ENCODE measurements at regions of chrX and their contacts with region 1.

Region 1: DNA sequence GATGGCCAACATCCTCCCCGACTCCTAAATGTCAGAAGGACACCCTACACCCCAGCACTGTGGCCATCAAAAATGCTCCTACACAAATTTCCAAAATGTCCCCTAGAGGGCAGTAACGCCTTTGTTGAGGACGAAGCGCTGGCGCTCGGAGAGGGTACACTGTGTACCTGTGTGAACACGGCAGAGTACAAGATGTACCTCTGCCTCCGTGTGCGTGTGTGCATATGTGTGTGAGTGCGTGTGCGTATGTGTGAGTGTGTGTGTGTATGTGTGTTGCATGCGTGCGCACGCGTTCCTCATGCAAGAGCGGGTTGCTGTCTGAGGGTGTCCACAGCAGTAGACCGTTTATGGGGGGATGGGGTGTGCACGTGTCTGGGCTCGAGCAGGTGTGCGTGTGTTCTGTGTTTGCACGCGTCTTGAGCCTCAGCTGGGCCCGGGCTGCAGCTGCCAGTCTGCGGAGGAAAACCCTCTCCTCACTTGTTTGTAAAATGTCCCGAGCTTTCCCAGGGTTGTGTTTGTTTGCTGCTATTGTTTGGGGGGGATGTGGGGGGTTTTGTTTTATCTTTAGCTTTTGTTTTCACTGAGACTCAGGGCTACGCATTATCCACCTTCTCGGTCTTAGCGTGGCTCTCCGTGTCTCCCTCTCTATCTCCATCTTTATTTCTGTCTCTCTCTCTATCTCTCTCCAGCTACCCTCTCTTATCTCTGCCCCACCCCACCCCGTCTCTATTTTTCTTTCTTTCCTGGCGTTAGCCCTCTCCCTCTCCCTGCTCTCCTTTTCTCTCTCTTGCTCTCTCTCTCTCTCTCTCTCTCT is 10.4 kb upstream of the TSPYL2 start:
- DNase-seq: peak; percentile 39 to 90 (median 62)
- ATAC-seq: peak; percentile 88
- H3K4me3 ChIP-seq: peak overlapping the region; percentile 58
- H3K4me3 Mint-ChIP-seq: peak overlapping the region; percentile 91
- H3K27ac ChIP-seq: no peak overlapping the region
- H3K27ac Mint-ChIP-seq: peak overlapping the region; percentile 89
- H3K4me1 ChIP-seq: peaks cover 11% of the 10 kb centered on the region
- H3K4me1 Mint-ChIP-seq: peaks cover 17% of the 10 kb centered on the region
- H3K27me3 ChIP-seq: no peaks in the 10 kb centered on the region
- H3K27me3 Mint-ChIP-seq: no peaks in the 10 kb centered on the region
- CTCF ChIP-seq: peak; percentile 67

Region 2: DNA sequence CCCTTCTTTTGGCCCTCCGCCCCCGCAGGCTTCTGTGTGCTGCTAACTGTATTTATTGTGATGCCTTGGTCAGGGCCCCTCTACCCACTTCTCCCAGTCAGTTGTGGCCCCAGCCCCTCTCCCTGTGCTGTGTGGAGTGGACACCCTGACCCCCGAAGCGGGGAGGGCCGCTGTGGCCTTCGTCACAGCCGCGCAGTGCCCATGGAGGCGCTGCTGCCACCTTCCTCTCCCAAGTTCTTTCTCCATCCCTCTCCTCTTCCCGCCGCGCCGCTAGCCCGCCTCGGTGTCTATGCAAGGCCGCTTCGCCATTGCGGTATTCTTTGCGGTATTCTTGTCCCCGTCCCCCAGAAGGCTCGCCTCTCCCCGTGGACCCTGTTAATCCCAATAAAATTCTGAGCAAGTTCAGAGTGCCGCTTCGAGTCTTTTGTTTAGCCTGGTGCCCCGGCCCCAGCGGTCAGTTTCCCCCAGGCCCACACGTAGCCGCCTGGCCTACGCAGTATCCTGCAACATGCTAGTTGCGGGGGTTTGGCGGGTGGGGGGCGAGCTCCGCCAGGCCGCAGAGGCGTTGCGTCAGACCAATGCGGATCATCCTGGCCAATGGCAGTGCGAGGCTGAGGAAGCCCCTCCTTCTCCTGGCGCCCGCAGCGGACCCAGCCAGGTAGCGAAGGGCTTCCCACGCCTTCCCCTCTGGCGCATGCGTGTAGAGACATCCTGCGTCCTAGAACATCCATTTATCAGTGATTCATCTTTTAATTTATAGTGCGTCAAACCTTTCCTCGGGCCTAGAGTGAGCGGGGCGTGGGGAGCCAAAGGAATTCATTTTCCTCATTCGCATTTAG is 16.5 kb after region 1 on chrX:
- CTCF ChIA-PET with region 1: interaction called, 4 read pairs
- POLR2A ChIA-PET with region 1: interaction called, 10 read pairs
- intact Hi-C with region 1: loop called (anchors 1 kb)
- DNase-seq: peak; percentile 62 to 95 (median 76)
- ATAC-seq: peak; percentile 72
- H3K4me3 ChIP-seq: peak overlapping the region; percentile 60
- H3K4me3 Mint-ChIP-seq: peak overlapping the region; percentile 95
- H3K27ac ChIP-seq: peak overlapping the region; percentile 89 to 94
- H3K27ac Mint-ChIP-seq: peak overlapping the region; percentile 98
- H3K4me1 ChIP-seq: peaks cover 39% of the 10 kb centered on the region
- H3K4me1 Mint-ChIP-seq: peaks cover 67% of the 10 kb centered on the region
- H3K27me3 ChIP-seq: no peaks in the 10 kb centered on the region
- H3K27me3 Mint-ChIP-seq: no peaks in the 10 kb centered on the region
- CTCF ChIP-seq: no peak

Region 3: GRCh38 chrX:53093748-53094583 is 22.2 kb after region 1 on chrX and contains the start of gene KANTR:
- CTCF ChIA-PET with region 1: interaction called, 4 read pairs
- POLR2A ChIA-PET with region 1: interaction called, 10 read pairs
- intact Hi-C with region 1: loop called (anchors 1 kb)
- DNase-seq: peak; percentile 36 to 92 (median 72)
- ATAC-seq: peak; percentile 76
- H3K4me3 ChIP-seq: peak within 1 kb of the TSS; percentile 81
- H3K4me3 Mint-ChIP-seq: peak within 1 kb of the TSS; percentile 93
- H3K27ac ChIP-seq: peak within 1 kb of the TSS; percentile 58 to 85
- H3K27ac Mint-ChIP-seq: peak within 1 kb of the TSS; percentile 93
- H3K4me1 ChIP-seq: peaks cover 16% of the 10 kb centered on the region
- H3K4me1 Mint-ChIP-seq: peaks cover 35% of the 10 kb centered on the region
- H3K27me3 ChIP-seq: no peaks in the 10 kb centered on the region
- H3K27me3 Mint-ChIP-seq: no peaks in the 10 kb centered on the region
- CTCF ChIP-seq: no peak
- total RNA-seq, gene KANTR: 6.2 to 6.8 TPM

Measured in CD4-positive, alpha-beta T cell (primary cell).